Ascending aorta (tissue), 2 donors: ENCODE measurements at regions of chr11 and their contacts with region 1.

Region 1: GRCh38 chr11:30653606-30654005 is 67.5 kb upstream of the MPPED2 start:
- DNase-seq: no peak
- H3K4me3 ChIP-seq: no peak overlapping the region
- H3K27ac ChIP-seq: no peak overlapping the region
- H3K4me1 ChIP-seq: no peaks in the 10 kb centered on the region
- H3K27me3 ChIP-seq: no peaks in the 10 kb centered on the region
- CTCF ChIP-seq: peak in 1 of 3 experiments; percentile 30

Region 2: GRCh38 chr11:30855383-30856006 is 201.9 kb after region 1 on chr11:
- intact Hi-C with region 1: loop called (anchors 5 kb)
- DNase-seq: no peak
- H3K4me3 ChIP-seq: no peak overlapping the region
- H3K27ac ChIP-seq: no peak overlapping the region
- H3K4me1 ChIP-seq: peaks cover 0 to 2% of the 10 kb centered on the region in 2 donors
- H3K27me3 ChIP-seq: no peaks in the 10 kb centered on the region
- CTCF ChIP-seq: peak in 2 of 3 experiments; percentile 45 to 64